ENCODE measurements at regions of chr6 and their contacts with region 1.

Region 1: DNA sequence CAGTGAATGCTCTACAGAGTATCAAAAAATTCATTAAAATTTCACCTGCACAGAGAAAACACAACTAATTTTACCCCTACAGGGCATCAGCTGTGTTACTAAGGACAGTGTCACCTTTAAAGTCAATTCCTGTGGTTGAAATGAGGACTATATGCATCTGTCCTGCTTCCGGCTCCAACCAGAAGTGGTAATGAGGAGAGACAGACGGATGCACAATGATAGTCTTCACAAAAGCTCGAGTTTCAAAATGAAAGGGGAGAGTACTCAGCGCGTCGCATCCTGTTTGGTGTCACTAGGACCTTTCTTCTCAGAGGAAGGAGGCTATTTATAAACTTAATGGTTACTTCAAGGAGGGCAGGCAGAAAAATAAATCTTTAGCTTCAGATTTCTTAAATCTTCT is 86.5 kb downstream of the LYRM4 start:
- DNase-seq: peak; percentile 12 to 81 (median 63)
- ATAC-seq: peak; percentile 92 to 95
- H3K4me3 Mint-ChIP-seq: peak overlapping the region; percentile 64 to 82 (median 74)
- H3K27ac Mint-ChIP-seq: peak overlapping the region; percentile 87 to 96 (median 92)
- H3K4me1 Mint-ChIP-seq: peaks cover 29 to 72% (median 61%) of the 10 kb centered on the region in 4 donors
- H3K27me3 Mint-ChIP-seq: no peaks in the 10 kb centered on the region

Region 2: GRCh38 chr6:5095236-5095635 is 79.0 kb before region 1 on chr6:
- POLR2A ChIA-PET with region 1: no interaction called
- DNase-seq: no peak
- ATAC-seq: no peak
- H3K4me3 Mint-ChIP-seq: no peak overlapping the region
- H3K27ac Mint-ChIP-seq: no peak overlapping the region
- H3K4me1 Mint-ChIP-seq: peaks cover 8 to 15% (median 9%) of the 10 kb centered on the region in 4 donors
- H3K27me3 Mint-ChIP-seq: peaks cover 0 to 11% (median 7%) of the 10 kb centered on the region in 5 donors

Region 3: DNA sequence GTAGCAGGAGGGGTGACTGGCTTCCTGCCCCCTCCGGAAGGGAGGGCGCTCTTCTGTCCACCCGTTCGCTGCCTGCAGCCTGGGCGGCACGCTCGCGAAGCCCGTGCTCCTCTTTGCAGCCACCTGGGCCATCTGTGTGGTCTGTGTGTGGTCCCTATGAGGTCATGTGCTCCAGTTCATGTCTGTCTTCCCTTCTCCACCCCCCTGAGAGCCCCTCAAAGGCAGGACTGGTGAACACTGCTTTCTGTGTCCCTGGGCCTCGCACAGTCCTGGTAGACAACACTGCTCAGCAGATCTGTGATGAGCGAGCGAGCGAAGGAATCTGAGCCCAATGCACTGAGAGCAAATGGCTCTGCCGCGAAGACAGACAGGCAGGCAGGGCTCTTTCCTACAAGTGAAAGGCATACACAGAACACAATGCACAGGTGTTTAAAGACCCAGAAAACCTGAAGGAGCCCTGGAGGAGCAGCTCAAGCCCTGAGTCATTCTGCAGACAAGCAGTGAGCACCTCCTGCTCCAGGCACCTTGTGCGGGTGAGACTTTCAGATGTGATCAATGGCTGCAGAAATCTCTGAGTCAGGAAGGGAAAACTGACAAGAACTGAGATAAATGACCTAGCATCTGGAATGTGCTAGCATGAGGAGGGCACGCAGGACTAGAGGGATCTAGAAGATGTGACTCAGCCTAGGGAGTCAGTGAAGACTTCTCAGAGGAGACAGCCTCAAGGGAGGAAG is 62.0 kb before region 1 on chr6:
- POLR2A ChIA-PET with region 1: no interaction called
- DNase-seq: no peak
- ATAC-seq: no peak
- H3K4me3 Mint-ChIP-seq: no peak overlapping the region
- H3K27ac Mint-ChIP-seq: no peak overlapping the region
- H3K4me1 Mint-ChIP-seq: no peaks in the 10 kb centered on the region
- H3K27me3 Mint-ChIP-seq: no peaks in the 10 kb centered on the region

Region 4: GRCh38 chr6:5125152-5126006 is 48.9 kb before region 1 on chr6:
- POLR2A ChIA-PET with region 1: no interaction called
- DNase-seq: no peak
- ATAC-seq: no peak
- H3K4me3 Mint-ChIP-seq: no peak overlapping the region
- H3K27ac Mint-ChIP-seq: no peak overlapping the region
- H3K4me1 Mint-ChIP-seq: peaks cover 0 to 5% (median 1%) of the 10 kb centered on the region in 4 donors
- H3K27me3 Mint-ChIP-seq: no peaks in the 10 kb centered on the region

Region 5: DNA sequence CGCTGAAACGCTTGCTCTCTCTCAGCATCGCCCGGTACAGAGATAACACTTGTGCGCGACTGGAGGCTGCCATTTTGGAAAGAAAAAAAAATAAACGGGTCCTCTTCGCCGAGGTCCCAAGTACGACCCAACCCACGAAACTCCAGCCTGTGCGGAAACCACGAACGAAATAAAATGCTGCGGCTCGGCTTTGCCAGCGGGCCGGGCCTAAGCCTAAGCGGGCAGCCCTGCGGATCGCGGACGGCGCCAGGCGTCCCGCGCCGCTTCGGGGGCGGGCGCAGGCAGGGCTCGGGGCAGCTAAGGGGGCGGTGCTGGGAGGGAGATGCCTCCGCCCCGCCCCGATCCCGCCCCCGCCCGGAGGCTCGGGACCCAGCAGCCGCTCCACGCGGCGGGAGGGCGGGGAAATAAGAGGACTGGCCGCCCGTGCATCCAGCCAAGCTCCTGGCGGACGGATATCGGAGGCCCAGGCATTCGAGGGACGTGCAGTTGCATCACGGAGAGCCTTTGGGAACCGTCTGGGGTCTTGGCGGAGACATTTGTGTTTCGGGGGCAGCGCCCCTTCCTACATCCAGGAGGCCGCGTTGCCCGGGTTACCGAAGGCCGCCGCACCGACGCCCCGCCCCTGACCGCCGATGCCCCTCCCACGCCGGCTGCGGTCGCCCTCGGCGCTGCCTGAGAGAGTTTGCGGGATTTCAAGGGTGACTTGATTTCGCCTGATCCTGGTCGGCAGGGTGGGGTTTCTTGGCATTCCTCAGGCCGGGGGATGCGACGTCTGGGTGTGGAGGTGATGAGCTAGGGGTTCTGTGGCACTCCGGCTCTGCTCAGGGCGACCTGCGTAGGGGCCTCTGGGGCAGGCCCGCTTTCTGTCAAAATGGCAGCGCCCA is 86.7 kb after region 1 on chr6 and contains the starts of genes FARS2 and LYRM4:
- POLR2A ChIA-PET with region 1: interaction called, 19 read pairs
- DNase-seq: peak; percentile 83 to 100 (median 93)
- ATAC-seq: peak; percentile 74 to 75
- H3K4me3 Mint-ChIP-seq: peak within 1 kb of the TSS; percentile 93 to 99 (median 98)
- H3K27ac Mint-ChIP-seq: peak within 1 kb of the TSS; percentile 99 to 100 (median 100)
- H3K4me1 Mint-ChIP-seq: peaks cover 22 to 39% (median 31%) of the 10 kb centered on the region in 4 donors
- H3K27me3 Mint-ChIP-seq: no peaks in the 10 kb centered on the region
- polyA plus RNA-seq, gene FARS2: 28.1 to 39.1 (median 28.8) TPM
- polyA plus RNA-seq, gene LYRM4: 52.3 to 56.8 (median 56.1) TPM

Region 6: DNA sequence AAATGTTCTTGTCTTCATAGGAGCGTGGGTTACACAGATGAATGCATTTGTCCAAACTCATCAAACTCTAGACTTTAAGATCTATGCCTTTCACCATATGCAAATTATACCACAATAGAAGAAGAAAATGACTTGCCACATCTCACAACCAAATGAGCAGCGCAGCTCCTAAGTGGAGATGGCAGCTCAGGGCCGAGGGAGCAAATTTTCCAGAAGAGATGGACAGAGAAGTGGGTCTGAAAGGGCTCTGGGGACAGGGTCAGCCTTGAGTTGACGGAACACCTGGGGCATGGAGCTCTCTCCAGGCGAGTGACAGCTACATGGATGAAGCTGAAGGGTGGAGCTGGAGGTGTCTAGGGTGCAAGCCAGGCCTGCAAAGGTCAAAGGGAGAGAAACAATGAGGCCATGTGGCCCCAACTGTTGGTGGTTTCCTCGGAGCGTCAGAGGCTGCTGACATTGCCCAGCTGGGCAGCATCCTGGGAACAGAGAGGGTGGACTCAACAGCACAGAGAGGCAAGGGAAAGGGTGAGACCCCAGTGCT is 604.1 kb after region 1 on chr6:
- POLR2A ChIA-PET with region 1: no interaction called
- DNase-seq: no peak
- ATAC-seq: no peak
- H3K4me3 Mint-ChIP-seq: no peak overlapping the region
- H3K27ac Mint-ChIP-seq: peak overlapping the region in 1 of 10 donors; percentile 82
- H3K4me1 Mint-ChIP-seq: peaks cover 0 to 9% (median 6%) of the 10 kb centered on the region in 4 donors
- H3K27me3 Mint-ChIP-seq: no peaks in the 10 kb centered on the region